ENCODE measurements at regions of chr10 and their contacts with region 1.

Region 1: DNA sequence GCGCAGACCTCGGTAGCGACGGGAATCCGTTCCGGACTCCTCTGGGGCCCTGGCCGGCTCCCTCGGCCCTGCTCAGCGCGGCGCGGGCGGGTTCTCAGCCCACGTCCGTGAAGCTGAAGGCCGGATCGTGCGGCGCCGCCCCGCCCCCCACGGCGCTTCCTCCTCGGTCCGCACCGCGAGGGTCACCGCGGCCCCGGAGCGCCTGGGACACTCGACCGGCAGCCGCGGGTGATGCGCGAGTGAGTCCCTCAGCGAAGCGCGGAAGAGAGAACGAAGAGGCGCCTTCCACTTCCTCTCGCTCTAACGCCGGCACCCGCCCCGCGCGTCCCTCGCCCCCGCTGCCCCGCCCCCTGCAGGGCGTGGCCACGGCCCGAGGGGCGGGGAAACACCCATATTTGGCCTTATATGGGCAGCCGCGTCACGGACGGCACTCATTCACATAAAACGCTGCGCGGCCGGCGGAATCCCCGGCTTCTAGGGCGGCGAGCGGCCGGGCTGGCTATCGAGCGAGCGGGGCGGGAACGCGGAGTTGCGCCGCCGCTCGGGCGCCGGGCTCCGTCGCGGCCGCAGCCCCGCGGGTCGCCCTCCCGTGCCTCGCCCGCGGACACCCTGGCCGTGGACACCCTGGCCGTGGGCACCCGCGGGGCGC is at the start of gene DUSP5:
- DNase-seq: peak; percentile 91 to 99 (median 96)
- ATAC-seq: peak; percentile 96
- H3K4me3 ChIP-seq: peak within 1 kb of the TSS; percentile 77
- H3K4me3 Mint-ChIP-seq: peak within 1 kb of the TSS; percentile 89 to 97 (median 92)
- H3K27ac ChIP-seq: peak within 1 kb of the TSS; percentile 71
- H3K27ac Mint-ChIP-seq: peak within 1 kb of the TSS; percentile 83 to 94 (median 91)
- H3K4me1 ChIP-seq: peaks cover 32 to 43% of the 10 kb centered on the region in 2 donors
- H3K4me1 Mint-ChIP-seq: peaks cover 43 to 57% (median 50%) of the 10 kb centered on the region in 7 donors
- H3K27me3 ChIP-seq: no peaks in the 10 kb centered on the region
- H3K27me3 Mint-ChIP-seq: peaks cover 0 to 3% (median 0%) of the 10 kb centered on the region in 5 donors
- total RNA-seq, gene DUSP5: 0.38 to 57.2 (median 35.7) TPM

Region 2: DNA sequence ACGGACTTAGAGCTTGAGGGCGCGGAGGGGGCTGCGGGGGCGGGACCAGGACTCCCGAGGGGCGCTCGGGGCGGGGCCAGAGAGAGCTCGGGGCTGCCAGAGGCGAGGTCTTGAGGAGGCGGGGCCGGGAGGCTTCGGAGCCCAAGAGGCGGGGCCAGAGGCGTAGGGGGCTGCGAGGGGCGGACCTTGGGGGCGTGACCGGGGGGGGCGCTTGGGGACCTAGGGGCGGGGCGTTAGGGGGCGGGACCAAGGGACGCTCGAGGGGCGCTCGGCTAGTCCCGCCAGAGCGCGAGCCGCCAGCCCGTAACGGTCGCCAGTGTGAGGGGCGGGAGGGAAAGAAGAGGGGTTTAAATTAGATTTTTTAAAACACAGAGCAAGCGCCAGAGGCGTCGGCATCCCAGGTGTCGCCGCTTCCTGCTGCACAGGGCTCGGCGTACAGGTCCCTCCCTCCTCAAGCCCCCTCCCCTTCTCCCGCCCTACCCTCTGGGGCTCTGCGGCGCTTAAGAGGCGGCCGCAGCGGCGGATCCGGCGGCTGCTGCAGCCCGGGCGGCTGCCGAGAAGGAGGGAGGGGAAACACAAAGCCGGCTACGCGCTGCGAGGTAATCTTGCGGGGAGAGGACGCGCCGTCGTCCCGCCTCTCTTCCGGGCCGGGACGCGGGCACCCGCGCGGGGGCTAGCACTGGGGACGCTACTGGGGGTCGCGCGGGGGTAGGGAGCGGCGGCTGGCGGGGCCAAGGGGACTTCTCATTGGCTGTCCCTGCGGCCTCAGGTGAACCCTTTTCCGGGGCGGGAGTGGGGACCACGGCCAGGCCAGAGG is 489.7 kb before region 1 on chr10 and contains the start of gene ADD3:
- CTCF ChIA-PET with region 1: no interaction called
- POLR2A ChIA-PET with region 1: no interaction called
- intact Hi-C with region 1: loop called (anchors 1 to 5 kb)
- DNase-seq: peak; percentile 82 to 93 (median 90)
- ATAC-seq: peak; percentile 86
- H3K4me3 ChIP-seq: peak within 1 kb of the TSS; percentile 66
- H3K4me3 Mint-ChIP-seq: peak within 1 kb of the TSS in 2 of 10 donors; percentile 99 to 100
- H3K27ac ChIP-seq: peak within 1 kb of the TSS; percentile 88
- H3K27ac Mint-ChIP-seq: peak within 1 kb of the TSS in 7 of 9 donors; percentile 91 to 98 (median 94)
- H3K4me1 ChIP-seq: peaks cover 33 to 36% of the 10 kb centered on the region in 2 donors
- H3K4me1 Mint-ChIP-seq: peaks cover 28 to 54% (median 44%) of the 10 kb centered on the region in 7 donors
- H3K27me3 ChIP-seq: no peaks in the 10 kb centered on the region
- H3K27me3 Mint-ChIP-seq: peaks cover 0 to 6% (median 0%) of the 10 kb centered on the region in 5 donors
- total RNA-seq, gene ADD3: 281 to 463 (median 342) TPM

Region 3: DNA sequence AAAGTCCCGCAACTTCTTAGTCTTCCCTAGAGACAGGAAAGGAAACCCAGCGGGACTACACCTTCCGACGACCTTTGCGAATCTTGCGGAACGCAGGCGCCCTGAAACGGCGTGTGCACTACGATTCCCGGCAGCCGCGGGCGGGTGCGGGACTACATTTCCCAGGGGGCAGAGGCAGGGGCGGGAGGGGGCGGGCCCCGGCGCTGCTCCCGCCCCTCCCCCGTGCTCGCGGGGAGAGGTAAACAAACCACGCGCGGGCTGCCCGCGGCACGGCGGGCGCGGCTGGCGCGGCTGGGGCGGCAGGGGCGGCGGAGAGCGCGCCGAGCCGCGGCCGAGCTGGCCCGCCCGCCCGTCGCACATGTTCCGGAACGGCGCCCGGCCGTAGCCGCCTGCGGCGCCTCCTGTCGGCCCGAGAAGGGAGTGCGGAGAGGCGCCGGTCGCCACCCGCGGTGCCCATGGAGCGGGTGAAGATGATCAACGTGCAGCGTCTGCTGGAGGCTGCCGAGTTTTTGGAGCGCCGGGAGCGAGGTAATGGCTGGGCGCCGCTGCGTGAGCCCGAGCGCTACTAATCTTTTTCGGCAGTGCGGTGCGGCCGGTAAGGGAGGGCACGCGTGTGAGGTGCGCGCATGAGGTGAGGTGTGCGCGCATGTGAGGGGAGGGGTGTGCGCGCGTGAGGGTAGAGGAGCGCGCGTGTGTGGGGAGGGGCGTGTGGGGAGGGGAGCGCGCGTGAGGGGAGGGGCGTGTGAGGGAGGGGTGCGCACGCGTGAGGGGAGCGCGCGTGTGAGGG is 271.6 kb before region 1 on chr10:
- CTCF ChIA-PET with region 1: no interaction called
- POLR2A ChIA-PET with region 1: no interaction called
- intact Hi-C with region 1: loop called (anchors 1 to 5 kb)
- DNase-seq: peak; percentile 83 to 91 (median 88)
- ATAC-seq: peak; percentile 73
- H3K4me3 ChIP-seq: peak overlapping the region; percentile 75
- H3K4me3 Mint-ChIP-seq: peak overlapping the region; percentile 87 to 99 (median 94)
- H3K27ac ChIP-seq: peak overlapping the region; percentile 92
- H3K27ac Mint-ChIP-seq: peak overlapping the region; percentile 78 to 97 (median 96)
- H3K4me1 ChIP-seq: peaks cover 16 to 27% of the 10 kb centered on the region in 2 donors
- H3K4me1 Mint-ChIP-seq: peaks cover 27 to 68% (median 49%) of the 10 kb centered on the region in 7 donors
- H3K27me3 ChIP-seq: no peaks in the 10 kb centered on the region
- H3K27me3 Mint-ChIP-seq: no peaks in the 10 kb centered on the region

Region 4: GRCh38 chr10:110414563-110415309 is 82.8 kb before region 1 on chr10:
- CTCF ChIA-PET with region 1: no interaction called
- POLR2A ChIA-PET with region 1: no interaction called
- intact Hi-C with region 1: loop called (anchors 1 kb)
- DNase-seq: peak; percentile 42 to 84 (median 69)
- ATAC-seq: peak; percentile 96
- H3K4me3 ChIP-seq: no peak overlapping the region
- H3K4me3 Mint-ChIP-seq: peak overlapping the region in 9 of 10 donors; percentile 13 to 71 (median 40)
- H3K27ac ChIP-seq: no peak overlapping the region
- H3K27ac Mint-ChIP-seq: peak overlapping the region; percentile 20 to 88 (median 74)
- H3K4me1 ChIP-seq: peaks cover 14 to 35% of the 10 kb centered on the region in 2 donors
- H3K4me1 Mint-ChIP-seq: peaks cover 19 to 64% (median 26%) of the 10 kb centered on the region in 7 donors
- H3K27me3 ChIP-seq: no peaks in the 10 kb centered on the region
- H3K27me3 Mint-ChIP-seq: peaks cover 0 to 5% (median 0%) of the 10 kb centered on the region in 5 donors

Region 5: GRCh38 chr10:110567201-110568054 is 69.9 kb after region 1 on chr10 and contains the start of gene SMC3:
- CTCF ChIA-PET with region 1: no interaction called
- POLR2A ChIA-PET with region 1: no interaction called
- intact Hi-C with region 1: loop called (anchors 1 kb)
- DNase-seq: peak; percentile 82 to 96 (median 94)
- ATAC-seq: peak; percentile 94
- H3K4me3 ChIP-seq: peak within 1 kb of the TSS; percentile 88
- H3K4me3 Mint-ChIP-seq: peak within 1 kb of the TSS; percentile 91 to 99 (median 96)
- H3K27ac ChIP-seq: peak within 1 kb of the TSS; percentile 88
- H3K27ac Mint-ChIP-seq: peak within 1 kb of the TSS; percentile 96 to 99 (median 97)
- H3K4me1 ChIP-seq: peaks cover 20 to 21% of the 10 kb centered on the region in 2 donors
- H3K4me1 Mint-ChIP-seq: peaks cover 21 to 45% (median 38%) of the 10 kb centered on the region in 7 donors
- H3K27me3 ChIP-seq: no peaks in the 10 kb centered on the region
- H3K27me3 Mint-ChIP-seq: peaks cover 6 to 26% (median 14%) of the 10 kb centered on the region in 5 donors
- total RNA-seq, gene SMC3: 29.8 to 69.8 (median 48.5) TPM

Region 6: DNA sequence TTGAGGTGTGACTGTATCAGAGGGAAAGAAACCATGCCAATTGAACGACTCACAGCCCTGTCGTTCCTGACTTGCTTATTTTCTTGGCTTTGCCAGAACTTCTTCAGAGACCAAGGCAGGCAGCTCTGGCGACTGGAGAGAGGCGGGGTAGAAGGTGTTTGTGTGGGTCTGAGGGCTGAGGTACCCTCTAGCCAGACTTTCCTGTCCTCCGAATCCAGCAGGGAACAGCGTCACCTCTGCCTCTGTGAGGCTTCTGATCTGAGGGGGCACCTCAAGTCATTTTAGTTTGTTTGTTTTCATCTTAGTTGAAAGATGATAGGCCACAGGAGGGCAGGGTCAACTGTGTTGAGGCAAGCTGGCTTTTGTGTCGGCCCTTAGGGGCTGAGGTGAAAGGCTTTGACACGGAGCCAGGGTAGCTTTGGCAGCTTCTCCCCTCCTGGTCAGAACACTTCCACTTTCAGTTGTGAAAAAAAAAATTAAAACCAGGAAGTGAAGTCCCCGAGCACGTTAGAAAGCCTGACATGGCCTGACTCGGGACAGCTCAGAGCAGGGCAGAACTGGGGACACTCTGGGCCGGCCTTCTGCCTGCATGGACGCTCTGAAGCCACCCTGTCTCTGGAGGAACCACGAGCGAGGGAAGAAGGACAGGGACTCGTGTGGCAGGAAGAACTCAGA is 1878.3 kb after region 1 on chr10:
- CTCF ChIA-PET with region 1: no interaction called
- POLR2A ChIA-PET with region 1: no interaction called
- intact Hi-C with region 1: loop called in 1 of 2 experiments (anchors 2 kb)
- DNase-seq: peak; percentile 33 to 70 (median 59)
- ATAC-seq: peak; percentile 87
- H3K4me3 ChIP-seq: peak overlapping the region; percentile 89
- H3K4me3 Mint-ChIP-seq: peak overlapping the region; percentile 95 to 100 (median 100)
- H3K27ac ChIP-seq: peak overlapping the region; percentile 95
- H3K27ac Mint-ChIP-seq: peak overlapping the region; percentile 97 to 100 (median 99)
- H3K4me1 ChIP-seq: peaks cover 11 to 21% of the 10 kb centered on the region in 2 donors
- H3K4me1 Mint-ChIP-seq: peaks cover 36 to 72% (median 61%) of the 10 kb centered on the region in 7 donors
- H3K27me3 ChIP-seq: no peaks in the 10 kb centered on the region
- H3K27me3 Mint-ChIP-seq: no peaks in the 10 kb centered on the region